ENCODE measurements at regions of chr2 and their contacts with region 1.

Region 1: DNA sequence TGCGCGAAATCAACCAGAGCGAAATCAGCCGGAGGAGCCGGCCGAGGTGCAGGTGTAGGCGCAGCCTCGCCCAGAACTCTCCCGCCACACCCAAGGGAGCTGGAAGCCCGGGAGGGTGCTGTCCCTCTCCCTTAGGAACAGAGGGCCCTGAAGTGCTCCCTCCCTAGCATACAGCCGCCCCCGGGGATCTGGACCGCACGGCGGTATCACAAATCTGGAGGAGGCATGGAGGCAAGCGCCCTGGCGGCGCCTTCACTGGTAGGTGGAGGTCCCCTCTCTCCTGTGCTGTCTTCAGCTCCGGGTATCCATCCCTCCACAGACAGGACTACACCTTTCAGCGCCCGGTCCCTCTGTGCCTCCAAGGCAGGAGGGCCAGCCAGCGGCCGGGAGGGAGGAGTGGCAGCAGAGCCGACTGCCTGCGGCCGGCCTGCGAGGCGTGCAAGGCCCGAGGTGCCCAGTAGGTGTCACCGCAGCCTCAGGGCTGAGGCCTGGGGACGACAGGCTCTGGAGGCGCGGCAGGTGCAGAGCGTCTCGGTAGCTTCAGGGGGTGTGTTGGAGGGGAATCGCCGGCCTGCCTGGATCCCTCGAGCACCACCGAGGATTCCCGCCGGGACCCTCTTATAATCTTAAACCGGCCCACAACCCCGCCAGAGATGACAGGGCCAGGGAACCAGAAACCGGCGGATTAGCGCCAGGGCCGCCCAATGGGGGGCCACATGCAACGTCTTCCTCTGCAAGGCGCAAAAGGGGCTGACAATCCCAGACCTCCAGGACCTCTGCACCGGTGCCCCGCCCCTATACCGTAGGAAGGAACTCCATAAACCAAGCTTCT is 2.8 kb downstream of the IHH start:
- DNase-seq: peak; percentile 95
- H3K4me3 ChIP-seq: peak overlapping the region in 5 of 8 donors; percentile 0 to 51 (median 9)
- H3K27ac ChIP-seq: no peak overlapping the region
- H3K4me1 ChIP-seq: peaks cover 27 to 46% (median 41%) of the 10 kb centered on the region in 6 donors
- H3K27me3 ChIP-seq: peaks cover 18 to 93% (median 70%) of the 10 kb centered on the region in 7 donors
- CTCF ChIP-seq: peak; percentile 78 to 98 (median 91)
- POLR2A ChIP-seq: no peak

Region 2: DNA sequence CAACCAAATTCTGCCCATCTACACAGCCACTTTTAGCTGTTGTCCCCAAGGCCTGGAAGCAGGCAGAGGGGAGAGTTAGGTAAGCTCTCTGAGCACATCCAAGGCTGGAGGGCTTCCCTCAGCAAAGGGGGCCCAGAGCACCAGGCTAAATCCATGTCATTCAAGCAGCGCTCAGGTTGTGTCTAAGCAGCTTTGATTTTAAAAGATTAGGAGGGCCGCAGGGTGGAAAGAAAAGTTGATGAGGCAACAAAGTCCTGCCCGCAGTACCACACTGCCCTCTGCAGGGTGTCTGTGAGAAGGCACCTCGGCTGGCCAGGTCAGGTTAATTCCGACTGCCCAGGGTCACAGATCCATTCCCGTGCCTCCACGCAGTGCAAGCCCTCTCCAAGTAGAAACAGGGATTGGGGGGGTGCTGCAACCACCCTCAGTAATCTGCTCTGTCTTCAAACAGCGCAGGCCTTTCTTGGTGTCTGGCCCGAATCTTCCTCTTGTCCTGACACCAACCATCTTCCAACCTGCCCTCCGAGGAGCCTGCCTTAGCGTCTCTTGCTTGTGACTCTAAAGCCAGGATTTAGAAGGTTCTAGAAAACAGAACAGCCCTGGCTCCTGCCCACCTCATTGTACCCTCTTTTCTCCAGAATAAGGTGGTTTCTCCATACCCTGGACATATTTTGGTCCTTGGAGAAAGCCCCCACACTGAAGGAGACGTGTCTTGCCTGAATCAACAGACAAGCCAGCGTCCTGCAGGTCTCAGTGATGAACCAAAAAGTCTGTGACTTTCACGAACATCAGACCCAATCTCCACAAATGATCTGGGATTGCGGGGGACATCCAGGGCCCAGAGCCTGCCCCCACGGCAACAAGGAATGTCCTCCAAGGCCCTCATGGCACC is 1344.3 kb before region 1 on chr2:
- intact Hi-C with region 1: no loop called
- DNase-seq: peak; percentile 90
- H3K4me3 ChIP-seq: no peak overlapping the region
- H3K27ac ChIP-seq: peak overlapping the region in 4 of 8 donors; percentile 4 to 26 (median 11)
- H3K4me1 ChIP-seq: peaks cover 2 to 25% (median 16%) of the 10 kb centered on the region in 6 donors
- H3K27me3 ChIP-seq: peaks cover 0 to 18% (median 0%) of the 10 kb centered on the region in 7 donors
- CTCF ChIP-seq: peak; percentile 71 to 95 (median 90)
- POLR2A ChIP-seq: no peak

Region 3: GRCh38 chr2:219119422-219120043 is 61.6 kb after region 1 on chr2:
- intact Hi-C with region 1: loop called (anchors 10 kb)
- DNase-seq: peak; percentile 83
- H3K4me3 ChIP-seq: no peak overlapping the region
- H3K27ac ChIP-seq: no peak overlapping the region
- H3K4me1 ChIP-seq: peaks cover 0 to 8% (median 0%) of the 10 kb centered on the region in 6 donors
- H3K27me3 ChIP-seq: no peaks in the 10 kb centered on the region
- CTCF ChIP-seq: peak in 10 of 11 experiments; percentile 29 to 68 (median 60)
- POLR2A ChIP-seq: no peak

Region 4: DNA sequence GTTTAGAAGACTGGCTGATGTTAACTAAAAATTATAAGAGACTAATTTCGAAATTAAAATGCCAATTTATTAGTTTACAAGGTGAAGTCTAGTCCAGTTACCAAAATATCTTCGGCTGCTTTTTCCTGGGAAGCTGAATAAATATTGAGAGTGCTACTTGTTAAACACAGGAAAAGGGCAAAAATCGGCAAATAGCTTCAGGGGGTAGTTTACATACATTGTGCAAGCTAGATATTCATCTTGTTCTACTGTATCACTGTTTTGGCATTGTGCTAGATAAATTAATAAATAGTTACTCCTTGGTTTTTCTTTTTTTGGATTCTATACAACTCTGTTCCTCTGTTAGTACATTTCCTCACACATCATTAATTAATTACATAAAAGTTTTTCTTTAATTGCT is 73.4 kb after region 1 on chr2:
- intact Hi-C with region 1: no loop called
- DNase-seq: no peak
- H3K4me3 ChIP-seq: no peak overlapping the region
- H3K27ac ChIP-seq: no peak overlapping the region
- H3K4me1 ChIP-seq: no peaks in the 10 kb centered on the region
- H3K27me3 ChIP-seq: no peaks in the 10 kb centered on the region
- CTCF ChIP-seq: no peak
- POLR2A ChIP-seq: no peak

Region 5: GRCh38 chr2:219155054-219155644 is 97.2 kb after region 1 on chr2:
- intact Hi-C with region 1: loop called (anchors 10 kb)
- DNase-seq: no peak
- H3K4me3 ChIP-seq: no peak overlapping the region
- H3K27ac ChIP-seq: no peak overlapping the region
- H3K4me1 ChIP-seq: peaks cover 4 to 13% (median 7%) of the 10 kb centered on the region in 6 donors
- H3K27me3 ChIP-seq: no peaks in the 10 kb centered on the region
- CTCF ChIP-seq: peak in 10 of 11 experiments; percentile 38 to 65 (median 58)
- POLR2A ChIP-seq: no peak